ENCODE measurements at regions of chr1 and their contacts with region 1.

Region 1: DNA sequence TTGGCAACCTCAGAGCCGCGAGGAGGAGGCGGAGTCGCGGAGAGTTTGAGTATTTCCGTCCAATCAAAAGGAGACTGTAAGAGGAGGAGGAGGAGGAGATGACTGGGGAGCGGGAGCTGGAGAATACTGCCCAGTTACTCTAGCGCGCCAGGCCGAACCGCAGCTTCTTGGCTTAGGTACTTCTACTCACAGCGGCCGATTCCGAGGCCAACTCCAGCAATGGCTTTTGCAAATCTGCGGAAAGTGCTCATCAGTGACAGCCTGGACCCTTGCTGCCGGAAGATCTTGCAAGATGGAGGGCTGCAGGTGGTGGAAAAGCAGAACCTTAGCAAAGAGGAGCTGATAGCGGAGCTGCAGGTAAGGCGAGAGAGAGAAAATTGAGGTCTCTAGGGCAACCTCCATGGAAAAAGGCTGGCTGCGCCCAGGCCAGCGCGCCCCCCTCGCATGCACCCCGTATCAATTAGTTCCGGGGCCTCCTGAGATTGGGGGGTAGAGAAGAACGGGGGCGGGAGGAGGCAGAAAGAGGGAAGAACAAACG is at the start of gene PHGDH:
- DNase-seq: peak in 1 of 2 experiments; percentile 83
- H3K4me3 ChIP-seq: peak within 1 kb of the TSS; percentile 85 to 99 (median 99)
- H3K27ac ChIP-seq: peak within 1 kb of the TSS; percentile 89
- H3K4me1 ChIP-seq: peaks cover 14 to 32% (median 20%) of the 10 kb centered on the region in 4 experiments
- H3K27me3 ChIP-seq: no peaks in the 10 kb centered on the region
- CTCF ChIP-seq: no peak
- EP300 ChIP-seq: no peak
- POLR2A ChIP-seq: peak; percentile 88 to 99
- RAD21 ChIP-seq: no peak
- total RNA-seq, gene PHGDH: 674 and 687 TPM in 2 replicates

Region 2: DNA sequence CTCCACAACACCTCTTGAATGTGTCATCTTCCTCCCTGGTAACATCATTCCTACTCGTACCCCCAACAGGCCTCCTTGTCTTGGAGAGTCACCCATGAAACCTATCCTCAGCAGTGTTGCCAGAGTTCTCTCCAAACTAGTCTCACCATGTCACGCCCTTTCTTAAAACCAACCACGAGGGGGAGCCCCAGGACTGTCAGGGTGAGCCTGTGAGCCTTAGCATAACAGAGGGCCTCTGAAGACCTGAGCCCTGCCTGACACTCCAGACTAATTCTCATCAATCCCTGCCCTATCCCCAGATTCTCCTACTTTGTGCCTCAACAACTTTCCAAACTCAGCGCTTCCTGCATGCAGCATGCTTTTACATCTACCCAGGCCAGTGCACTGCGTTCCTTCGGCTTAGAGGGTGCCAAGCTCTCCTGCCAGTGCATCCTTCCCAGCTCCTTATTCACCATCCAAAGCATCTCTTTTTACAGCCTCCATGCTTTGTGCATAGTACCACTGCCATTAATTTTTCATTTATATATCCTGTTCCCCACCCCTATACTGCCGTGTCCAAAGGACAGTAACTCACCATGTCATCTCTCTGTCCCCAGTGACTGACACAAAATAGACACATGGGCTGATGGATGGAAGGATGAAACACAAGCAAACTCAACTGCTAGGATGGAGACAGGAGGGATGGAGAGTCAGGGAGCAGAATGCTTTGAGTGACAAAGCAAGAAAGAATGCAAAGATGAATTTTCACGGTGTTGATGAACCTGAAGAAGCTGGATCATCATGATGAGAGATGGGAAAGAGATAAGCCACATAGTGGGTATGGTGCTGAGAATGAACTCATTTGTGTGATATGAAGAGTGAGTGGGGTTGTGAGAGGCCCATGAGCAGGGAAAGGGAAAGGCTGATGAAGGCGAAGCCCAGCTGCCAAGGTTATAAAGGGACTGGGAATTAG is 97.8 kb before region 1 on chr1:
- CTCF ChIA-PET with region 1: interaction called, 5 read pairs
- POLR2A ChIA-PET with region 1: interaction called, 22 read pairs
- DNase-seq: peak; percentile 69 to 96
- H3K4me3 ChIP-seq: no peak overlapping the region
- H3K27ac ChIP-seq: no peak overlapping the region
- H3K4me1 ChIP-seq: peaks cover 0 to 3% (median under 1%) of the 10 kb centered on the region in 4 experiments; a peak in 5 of 7 replicates
- H3K27me3 ChIP-seq: no peaks in the 10 kb centered on the region
- CTCF ChIP-seq: peak; percentile 62 to 94 (median 80)
- EP300 ChIP-seq: no peak
- POLR2A ChIP-seq: no peak
- RAD21 ChIP-seq: peak; percentile 92 to 97

Region 3: DNA sequence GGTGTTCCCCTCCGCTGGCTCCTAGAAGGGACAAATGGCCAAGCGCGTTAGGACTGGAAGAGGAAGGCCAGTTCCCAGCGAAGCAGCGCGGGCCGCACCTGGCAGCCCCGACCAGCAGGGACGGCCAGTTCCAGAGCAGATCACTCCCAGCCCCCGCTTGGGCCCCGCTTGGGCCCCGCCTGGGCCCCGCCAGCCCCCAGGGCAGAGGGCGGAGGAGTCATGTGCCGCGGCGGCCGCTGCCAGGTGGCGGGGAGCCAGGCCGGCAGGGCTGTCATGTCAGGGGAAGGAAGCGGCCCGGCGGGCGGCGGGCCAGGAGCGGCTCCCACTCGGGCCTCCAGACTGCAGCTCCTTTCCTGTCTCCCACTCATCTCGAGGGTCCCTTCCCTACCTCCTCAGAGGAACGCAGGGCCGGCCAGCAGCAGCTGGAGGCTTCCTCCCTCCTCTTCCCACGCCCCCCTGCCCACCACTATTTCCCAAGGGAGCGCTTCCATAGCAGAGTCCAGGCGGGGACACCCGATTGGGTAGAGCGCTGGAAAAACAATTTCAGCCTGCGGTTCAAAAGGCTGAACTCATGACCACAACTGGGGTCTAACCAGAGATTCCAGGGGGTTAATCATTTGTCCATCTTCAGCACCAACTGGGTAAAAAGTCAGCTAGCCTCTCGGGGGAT is 80.3 kb before region 1 on chr1:
- CTCF ChIA-PET with region 1: no interaction called
- POLR2A ChIA-PET with region 1: interaction called, 11 read pairs
- DNase-seq: peak in 1 of 2 experiments; percentile 67
- H3K4me3 ChIP-seq: peak overlapping the region in 1 of 4 experiments; percentile 34; a peak in 2 of 8 replicates
- H3K27ac ChIP-seq: no peak overlapping the region
- H3K4me1 ChIP-seq: peaks cover 0 to 6% (median 3%) of the 10 kb centered on the region in 4 experiments; a peak in 4 of 7 replicates
- H3K27me3 ChIP-seq: no peaks in the 10 kb centered on the region
- CTCF ChIP-seq: no peak
- EP300 ChIP-seq: no peak
- POLR2A ChIP-seq: no peak
- RAD21 ChIP-seq: no peak

Region 4: DNA sequence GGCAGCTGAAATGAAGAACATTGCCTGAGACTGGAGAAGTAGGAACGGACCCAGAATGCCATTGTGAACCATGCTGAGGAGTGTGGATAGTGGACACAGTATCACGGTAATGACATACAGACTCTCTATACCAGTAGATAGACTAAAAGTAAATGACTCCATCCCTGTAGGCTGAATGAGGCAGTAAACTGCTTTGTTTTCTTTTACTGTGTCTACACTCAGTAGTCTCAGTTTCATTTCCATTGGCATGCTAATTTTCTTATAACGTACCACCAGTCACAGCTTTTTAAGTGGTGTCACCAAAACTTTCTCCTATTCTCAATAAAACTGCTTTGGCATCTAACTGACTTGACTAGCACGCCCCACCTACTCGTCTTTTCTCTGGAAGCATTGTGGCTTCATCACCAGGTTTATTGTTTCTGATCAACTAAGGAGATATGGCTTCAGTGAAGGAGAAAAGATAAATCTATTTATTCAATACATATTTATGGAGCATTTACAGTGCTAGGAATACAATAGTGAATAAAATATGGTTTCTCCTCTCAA is 55.4 kb before region 1 on chr1:
- CTCF ChIA-PET with region 1: interaction called, 3 read pairs
- POLR2A ChIA-PET with region 1: interaction called, 39 read pairs
- DNase-seq: no peak
- H3K4me3 ChIP-seq: no peak overlapping the region
- H3K27ac ChIP-seq: no peak overlapping the region
- H3K4me1 ChIP-seq: peaks cover 0 to 8% (median 3%) of the 10 kb centered on the region in 4 experiments; a peak in 3 of 7 replicates
- H3K27me3 ChIP-seq: no peaks in the 10 kb centered on the region
- CTCF ChIP-seq: no peak
- EP300 ChIP-seq: no peak
- POLR2A ChIP-seq: no peak
- RAD21 ChIP-seq: no peak

Region 5: DNA sequence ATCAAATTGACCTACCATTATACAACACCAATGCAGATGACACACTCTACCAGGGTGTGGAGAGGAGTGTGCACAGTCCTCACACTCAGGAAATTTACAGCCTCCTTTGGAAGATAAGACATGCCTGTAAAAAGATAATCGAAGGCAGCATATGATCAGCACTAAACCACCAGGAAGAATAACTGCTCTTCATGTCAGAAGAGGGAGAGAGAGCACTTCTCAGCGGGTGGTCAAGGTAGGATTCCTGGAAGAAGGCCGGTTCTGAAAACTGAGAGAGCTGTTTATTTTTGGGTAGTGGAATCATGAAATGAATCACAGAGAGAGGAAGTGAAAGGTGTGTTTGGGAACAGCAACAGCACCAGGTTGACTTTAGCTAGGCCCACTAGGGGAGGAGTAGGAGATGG is 49.8 kb before region 1 on chr1:
- CTCF ChIA-PET with region 1: interaction called, 3 read pairs
- POLR2A ChIA-PET with region 1: interaction called, 39 read pairs
- DNase-seq: no peak
- H3K4me3 ChIP-seq: no peak overlapping the region
- H3K27ac ChIP-seq: no peak overlapping the region
- H3K4me1 ChIP-seq: peaks cover 0 to 5% (median 1%) of the 10 kb centered on the region in 4 experiments; a peak in 2 of 7 replicates
- H3K27me3 ChIP-seq: no peaks in the 10 kb centered on the region
- CTCF ChIP-seq: no peak
- EP300 ChIP-seq: no peak
- POLR2A ChIP-seq: no peak
- RAD21 ChIP-seq: no peak

Region 6: DNA sequence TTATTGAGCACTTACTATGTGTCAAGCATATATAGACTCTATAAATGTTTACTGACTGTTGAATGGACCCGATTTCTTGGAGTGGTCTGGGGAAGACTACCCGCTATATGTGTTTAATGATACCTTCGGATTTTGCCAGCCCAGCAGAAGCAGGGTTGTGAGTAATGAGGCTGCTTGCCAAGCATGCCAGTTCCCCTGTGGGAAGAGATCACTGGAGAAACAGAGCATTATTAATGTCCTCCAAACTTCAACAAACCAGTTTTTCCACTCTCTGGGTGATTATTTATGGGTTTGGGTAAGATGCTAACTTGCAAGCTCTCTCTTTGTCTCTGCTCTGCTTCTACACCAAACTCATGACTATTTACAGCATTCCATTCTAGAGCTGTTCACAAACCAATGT is 25.2 kb before region 1 on chr1:
- CTCF ChIA-PET with region 1: interaction called, 4 read pairs
- POLR2A ChIA-PET with region 1: interaction called, 132 read pairs
- DNase-seq: no peak
- H3K4me3 ChIP-seq: peak overlapping the region in 1 of 4 experiments; percentile 32; a peak in 1 of 8 replicates
- H3K27ac ChIP-seq: no peak overlapping the region
- H3K4me1 ChIP-seq: peaks cover 0 to 16% (median 10%) of the 10 kb centered on the region in 4 experiments; a peak in 6 of 7 replicates
- H3K27me3 ChIP-seq: no peaks in the 10 kb centered on the region
- CTCF ChIP-seq: no peak
- EP300 ChIP-seq: no peak
- POLR2A ChIP-seq: no peak
- RAD21 ChIP-seq: no peak

Measured in H1 (cell line).